ENCODE measurements at regions of chr15 and their contacts with region 1.

Region 1: GRCh38 chr15:52331490-52332240 is 36.1 kb upstream of the MYO5C start:
- DNase-seq: peak; percentile 54
- ATAC-seq: peak; percentile 47; the same call in 1 of the 2 replicates
- H3K4me3 ChIP-seq: no peak overlapping the region
- H3K27ac ChIP-seq: no peak overlapping the region
- H3K4me1 ChIP-seq: peaks cover 4% of the 10 kb centered on the region; the same call in 1 of the 2 replicates
- H3K27me3 ChIP-seq: no peaks in the 10 kb centered on the region
- CTCF ChIP-seq: peak; percentile 51
- POLR2A ChIP-seq: no peak
- RAD21 ChIP-seq: peak; percentile 63

Region 2: DNA sequence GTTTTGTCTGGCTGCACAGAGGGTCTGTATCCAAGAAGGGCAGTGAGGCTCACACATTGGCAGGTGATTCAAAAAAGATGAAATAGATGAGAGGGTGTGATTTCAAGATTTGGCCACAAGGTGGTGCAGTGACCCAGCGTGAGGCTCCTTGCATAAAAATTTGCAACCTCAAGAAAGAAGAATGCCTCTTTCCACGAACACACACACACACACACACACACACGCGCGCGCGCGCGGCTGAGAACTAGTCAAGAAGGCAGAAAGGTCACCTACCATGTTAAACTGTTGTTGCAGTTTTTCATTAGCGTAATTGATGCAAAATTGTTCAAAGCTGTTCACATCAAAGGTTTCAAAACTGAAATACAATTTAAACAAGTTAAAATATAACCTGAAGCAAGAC is 75.3 kb before region 1 on chr15:
- CTCF ChIA-PET with region 1: no interaction called
- POLR2A ChIA-PET with region 1: no interaction called
- dilution Hi-C with region 1: no loop called
- in situ Hi-C with region 1: no loop called
- intact Hi-C with region 1: loop called (anchors 1 kb)
- DNase-seq: peak; percentile 80
- ATAC-seq: peak; percentile 64
- H3K4me3 ChIP-seq: no peak overlapping the region; the same call in 1 of the 2 replicates
- H3K27ac ChIP-seq: no peak overlapping the region
- H3K4me1 ChIP-seq: peaks cover 10% of the 10 kb centered on the region
- H3K27me3 ChIP-seq: no peaks in the 10 kb centered on the region
- CTCF ChIP-seq: peak; percentile 82
- POLR2A ChIP-seq: no peak
- RAD21 ChIP-seq: peak; percentile 91

Region 3: GRCh38 chr15:52730173-52730572 is 398.5 kb after region 1 on chr15:
- CTCF ChIA-PET with region 1: no interaction called
- POLR2A ChIA-PET with region 1: no interaction called
- dilution Hi-C with region 1: no loop called
- in situ Hi-C with region 1: loop called (anchors 10 kb)
- intact Hi-C with region 1: loop called (anchors 5 kb)
- DNase-seq: peak; percentile 8
- ATAC-seq: no peak; the same call in 1 of the 2 replicates
- H3K4me3 ChIP-seq: no peak overlapping the region
- H3K27ac ChIP-seq: no peak overlapping the region
- H3K4me1 ChIP-seq: no peaks in the 10 kb centered on the region
- H3K27me3 ChIP-seq: no peaks in the 10 kb centered on the region
- CTCF ChIP-seq: no peak
- POLR2A ChIP-seq: no peak
- RAD21 ChIP-seq: no peak

Measured in IMR-90 (cell line).